ENCODE measurements at regions of chr1 and their contacts with region 1.

Region 1: DNA sequence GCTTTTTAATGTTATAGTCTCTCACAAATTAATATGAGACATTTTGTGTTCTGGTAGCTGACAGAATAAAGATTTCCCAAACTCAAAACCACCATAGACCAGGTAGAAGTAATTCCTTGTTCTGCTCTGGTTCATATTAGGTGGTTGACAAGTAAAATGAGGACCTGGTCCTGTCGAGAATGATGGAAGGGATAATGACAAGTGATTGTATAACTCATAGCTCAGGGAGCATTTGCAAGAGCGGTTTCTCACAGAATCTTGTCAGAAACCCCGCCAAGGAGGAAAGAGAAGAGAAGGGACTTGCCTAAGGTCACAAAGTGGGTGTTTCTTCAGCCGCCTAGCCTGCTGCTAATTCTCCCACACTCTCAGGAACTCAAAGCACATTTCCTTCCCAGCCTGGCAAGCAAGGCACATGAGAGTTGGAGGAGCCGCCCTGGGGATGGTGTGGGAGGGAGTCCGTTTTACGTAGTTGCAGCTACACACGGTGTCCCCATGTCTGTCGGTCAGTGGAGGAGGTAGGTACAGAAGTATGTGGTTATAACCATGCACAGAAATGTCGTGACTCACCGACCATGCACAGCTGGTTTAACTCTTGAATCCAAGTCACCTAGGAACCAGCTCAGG is 46.5 kb downstream of the SAMD13 start:
- DNase-seq: peak in 3 of 10 donors; percentile 28 to 54 (median 37)
- H3K4me3 ChIP-seq: no peak overlapping the region
- H3K27ac ChIP-seq: peak overlapping the region in 17 of 59 donors; percentile 0 to 92 (median 36)
- H3K27me3 ChIP-seq: no peaks in the 10 kb centered on the region
- CTCF ChIP-seq: no peak

Region 2: DNA sequence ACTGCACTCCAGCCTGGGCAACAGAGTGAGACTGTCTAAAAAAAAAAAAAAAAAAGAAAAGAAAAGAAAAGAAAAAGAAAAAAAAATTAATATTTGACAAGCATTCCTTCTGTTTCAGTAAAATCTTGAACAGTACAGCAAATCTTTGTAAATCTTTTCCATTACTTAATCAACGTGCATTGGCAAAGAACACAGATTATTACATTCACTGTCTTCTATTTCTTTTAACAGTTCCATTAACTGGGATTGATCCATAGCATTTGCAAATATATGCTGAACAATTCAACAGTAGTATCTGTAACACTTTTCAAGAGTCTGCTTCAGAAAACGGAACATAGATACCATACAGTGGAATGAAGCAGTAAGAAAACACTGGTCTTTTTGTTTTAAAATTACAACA is 36.7 kb before region 1 on chr1:
- intact Hi-C with region 1: loop called in 1 of 2 experiments (anchors 5 kb)
- DNase-seq: no peak
- H3K4me3 ChIP-seq: no peak overlapping the region
- H3K27ac ChIP-seq: peak overlapping the region in 1 of 59 donors; percentile 30
- H3K27me3 ChIP-seq: no peaks in the 10 kb centered on the region
- CTCF ChIP-seq: no peak

Region 3: GRCh38 chr1:84573967-84574842 is 226.2 kb after region 1 on chr1 and contains the start of gene CTBS:
- intact Hi-C with region 1: no loop called
- DNase-seq: peak; percentile 64 to 85 (median 78)
- H3K4me3 ChIP-seq: peak within 1 kb of the TSS; percentile 50 to 95 (median 78)
- H3K27ac ChIP-seq: peak within 1 kb of the TSS; percentile 54 to 98 (median 93)
- H3K27me3 ChIP-seq: no peaks in the 10 kb centered on the region
- CTCF ChIP-seq: peak in 7 of 56 donors; percentile 3 to 47 (median 5)
- total RNA-seq, gene CTBS: 4.5 to 15.6 (median 8.4) TPM

Region 4: DNA sequence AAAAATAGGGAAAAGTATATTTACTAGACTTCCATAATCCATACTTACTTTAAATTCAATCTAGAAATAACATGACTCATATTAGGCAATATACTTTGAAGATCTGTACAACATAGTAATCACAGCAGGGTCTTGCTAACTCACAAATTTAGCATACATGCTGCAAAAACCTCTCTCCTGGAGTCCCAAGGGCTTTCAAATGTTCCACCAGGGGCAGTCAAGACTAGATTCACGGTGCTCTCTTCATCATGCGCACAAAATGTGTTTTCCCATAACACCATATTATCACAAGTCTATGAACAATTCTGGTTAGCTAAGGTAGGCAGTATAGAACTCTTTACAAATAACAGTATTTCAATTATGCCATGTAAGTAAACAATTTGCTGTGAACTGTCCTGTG is 296.4 kb after region 1 on chr1:
- intact Hi-C with region 1: no loop called
- DNase-seq: no peak
- H3K4me3 ChIP-seq: no peak overlapping the region
- H3K27ac ChIP-seq: peak overlapping the region in 3 of 59 donors; percentile 5 to 81 (median 25)
- H3K27me3 ChIP-seq: no peaks in the 10 kb centered on the region
- CTCF ChIP-seq: no peak